ENCODE measurements at regions of chr1 and their contacts with region 1.

Region 1: GRCh38 chr1:229848752-229849677 is 218.0 kb upstream of the GALNT2 start:
- H3K4me3 ChIP-seq: no peak overlapping the region
- H3K27ac ChIP-seq: no peak overlapping the region
- H3K4me1 ChIP-seq: peaks cover 5% of the 10 kb centered on the region
- CTCF ChIP-seq: no peak

Region 2: GRCh38 chr1:229832695-229833094 is 16.3 kb before region 1 on chr1:
- CTCF ChIA-PET with region 1: interaction called, 13 read pairs
- POLR2A ChIA-PET with region 1: no interaction called
- H3K4me3 ChIP-seq: no peak overlapping the region
- H3K27ac ChIP-seq: no peak overlapping the region
- H3K4me1 ChIP-seq: no peaks in the 10 kb centered on the region
- CTCF ChIP-seq: no peak

Region 3: DNA sequence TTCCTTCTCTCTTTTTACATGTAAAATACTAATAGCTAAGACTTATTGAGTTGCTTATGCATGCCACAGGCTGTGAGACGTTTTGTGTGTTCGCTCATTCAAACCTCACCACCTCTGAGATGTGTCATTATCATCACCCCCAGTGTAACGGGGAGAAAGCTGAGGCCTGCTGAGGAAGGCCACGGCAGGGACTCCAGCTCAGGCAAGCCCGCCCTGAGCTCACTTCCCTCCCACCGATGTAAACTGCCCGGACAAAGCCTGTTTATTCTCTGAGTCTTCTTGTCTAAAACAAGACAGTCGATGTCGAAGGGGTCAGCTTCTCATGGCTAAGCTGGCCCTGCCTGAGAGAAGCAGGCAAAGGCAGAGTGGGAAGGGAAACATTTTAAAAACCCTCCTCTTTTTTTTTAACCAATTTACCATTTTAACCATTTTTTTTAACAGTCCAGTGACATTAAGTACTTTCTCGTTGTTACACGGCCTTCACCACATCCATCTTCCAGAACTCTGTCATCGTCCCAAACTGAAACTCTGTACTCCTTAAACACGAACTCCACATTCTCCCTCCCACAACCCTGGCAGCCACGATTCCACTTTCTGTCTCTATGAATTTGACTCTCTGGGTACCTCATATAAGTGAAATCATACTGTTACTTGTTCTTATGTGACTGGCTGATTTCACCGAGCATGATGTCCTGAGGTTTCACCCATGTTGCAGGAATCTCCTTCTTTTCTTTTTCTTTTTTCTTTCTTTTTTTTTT is 13.2 kb after region 1 on chr1:
- CTCF ChIA-PET with region 1: interaction called, 25 read pairs
- POLR2A ChIA-PET with region 1: no interaction called
- H3K4me3 ChIP-seq: no peak overlapping the region
- H3K27ac ChIP-seq: no peak overlapping the region
- H3K4me1 ChIP-seq: no peaks in the 10 kb centered on the region
- CTCF ChIP-seq: no peak

Region 4: DNA sequence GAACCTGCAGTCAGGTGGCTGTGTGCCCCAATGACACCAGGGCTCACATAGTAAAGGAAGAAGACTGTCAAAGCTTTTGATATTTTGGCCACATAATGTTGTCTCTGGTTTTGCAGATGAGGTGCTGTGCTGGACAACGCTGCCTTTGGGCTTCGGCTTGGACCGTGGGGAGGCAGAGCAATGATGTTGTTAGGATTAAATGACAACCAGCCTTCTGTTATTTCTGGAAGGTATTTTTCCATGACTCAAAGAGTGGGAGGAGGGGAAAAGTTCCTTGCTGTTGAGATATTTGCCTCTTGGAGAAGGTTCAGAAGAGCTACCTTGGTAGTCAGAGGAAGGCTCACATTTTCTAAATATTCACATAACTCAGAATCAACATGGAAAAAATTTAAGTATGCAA is 30.7 kb after region 1 on chr1:
- CTCF ChIA-PET with region 1: interaction called, 16 read pairs
- POLR2A ChIA-PET with region 1: no interaction called
- H3K4me3 ChIP-seq: no peak overlapping the region
- H3K27ac ChIP-seq: no peak overlapping the region
- H3K4me1 ChIP-seq: no peaks in the 10 kb centered on the region
- CTCF ChIP-seq: no peak